ENCODE measurements at regions of chr17 and their contacts with region 1.

Region 1: DNA sequence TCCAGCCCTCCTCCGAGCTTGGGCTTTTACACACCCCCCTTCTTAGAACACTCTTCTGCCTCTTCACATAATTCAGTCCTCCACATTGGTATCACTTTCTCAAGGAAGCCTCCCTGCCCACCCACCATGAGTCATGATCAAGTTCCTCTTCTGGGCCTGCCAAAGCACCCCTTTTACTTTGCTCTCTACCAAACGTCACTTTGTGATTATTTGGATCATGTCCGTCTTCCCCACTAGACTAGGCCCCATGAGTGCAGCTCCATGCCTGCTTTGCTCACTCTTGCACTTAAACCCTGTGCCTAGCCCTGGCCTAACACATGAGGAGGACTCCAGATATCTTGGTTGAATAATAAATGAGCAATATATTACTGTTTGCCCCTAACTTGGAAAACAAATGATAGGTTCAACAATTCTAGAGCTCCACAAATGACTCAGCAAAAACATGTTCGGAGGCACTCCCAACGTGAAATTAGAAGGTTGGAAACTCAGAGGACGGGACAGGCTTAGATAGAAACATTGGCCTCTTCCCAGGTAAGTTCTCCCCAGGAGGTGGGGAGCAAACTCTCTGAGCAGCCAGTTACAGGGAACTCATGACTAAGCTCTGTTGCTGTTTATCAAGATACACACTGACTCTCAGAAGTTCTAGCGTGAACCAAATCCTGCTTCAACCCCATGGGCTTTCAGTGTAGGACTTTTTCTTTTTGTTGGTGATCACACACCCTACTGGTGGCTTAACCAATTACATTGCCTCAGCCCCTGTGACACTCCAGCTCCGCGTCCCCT is 28.3 kb downstream of the G6PC1 start:
- DNase-seq: peak in 1 of 3 donors; percentile 28
- ATAC-seq: peak; percentile 93 to 94
- H3K4me3 ChIP-seq: no peak overlapping the region
- H3K27ac ChIP-seq: peak overlapping the region; percentile 85
- H3K4me1 ChIP-seq: peaks cover 3% of the 10 kb centered on the region
- H3K27me3 ChIP-seq: no peaks in the 10 kb centered on the region

Region 2: GRCh38 chr17:42843358-42843934 is 85.5 kb before region 1 on chr17:
- intact Hi-C with region 1: loop called in 1 of 4 experiments (anchors 2 kb)
- DNase-seq: no peak
- ATAC-seq: peak; percentile 51 to 60
- H3K4me3 ChIP-seq: no peak overlapping the region
- H3K27ac ChIP-seq: no peak overlapping the region
- H3K4me1 ChIP-seq: no peaks in the 10 kb centered on the region
- H3K27me3 ChIP-seq: no peaks in the 10 kb centered on the region

Region 3: DNA sequence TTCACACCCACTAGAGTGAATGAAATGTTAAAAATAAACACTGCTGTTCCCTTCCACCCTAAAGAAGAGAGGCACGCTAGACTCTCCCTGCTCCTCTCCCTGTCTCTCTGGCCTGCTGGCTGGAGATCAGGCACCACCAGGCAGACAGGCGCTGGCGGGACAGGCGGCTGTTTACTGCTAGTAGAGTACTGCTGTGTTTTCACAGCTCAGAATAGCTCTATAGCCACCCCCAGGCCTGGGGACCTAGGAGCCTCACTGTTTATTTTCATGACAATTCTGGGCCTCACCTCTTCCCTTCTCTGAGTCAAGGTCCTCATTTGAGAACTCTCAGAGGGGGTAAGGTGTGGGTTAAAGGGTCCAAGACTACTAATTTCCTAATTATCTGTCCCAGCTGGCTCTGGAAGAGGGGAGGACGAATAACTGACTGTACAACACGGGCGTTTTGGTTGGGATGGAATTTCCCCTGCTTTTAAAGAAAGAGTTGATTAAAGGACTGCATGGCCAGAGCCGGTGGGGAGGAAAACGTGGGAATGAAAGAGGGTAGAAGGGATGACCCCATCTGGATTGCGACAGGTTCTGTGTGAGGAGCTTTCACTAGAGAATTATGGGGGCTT is 37.3 kb before region 1 on chr17:
- intact Hi-C with region 1: loop called in 1 of 4 experiments (anchors 5 kb)
- DNase-seq: peak; percentile 67 to 89 (median 89)
- ATAC-seq: peak; percentile 93 to 94
- H3K4me3 ChIP-seq: no peak overlapping the region
- H3K27ac ChIP-seq: peak overlapping the region; percentile 93
- H3K4me1 ChIP-seq: peaks cover 18% of the 10 kb centered on the region
- H3K27me3 ChIP-seq: no peaks in the 10 kb centered on the region